Caco-2 (cell line): ENCODE measurements at regions of chr5 and their contacts with region 1.

Region 1: GRCh38 chr5:43396762-43397304 is 15.4 kb downstream of the CCL28 start:
- DNase-seq: peak; percentile 75 to 76
- H3K4me3 ChIP-seq: peak overlapping the region; percentile 71
- H3K4me3 Mint-ChIP-seq: peak overlapping the region; percentile 94
- H3K27ac Mint-ChIP-seq: peak overlapping the region; percentile 96
- H3K4me1 ChIP-seq: no peaks in the 10 kb centered on the region; the same call in 1 of the 2 replicates
- H3K4me1 Mint-ChIP-seq: no peaks in the 10 kb centered on the region
- H3K27me3 ChIP-seq: no peaks in the 10 kb centered on the region
- H3K27me3 Mint-ChIP-seq: no peaks in the 10 kb centered on the region
- CTCF ChIP-seq: no peak

Region 2: GRCh38 chr5:43432473-43433365 is 35.9 kb after region 1 on chr5:
- CTCF ChIA-PET with region 1: no interaction called
- POLR2A ChIA-PET with region 1: no interaction called
- intact Hi-C with region 1: loop called (anchors 5 kb)
- DNase-seq: peak; percentile 52 to 73
- H3K4me3 ChIP-seq: no peak overlapping the region
- H3K4me3 Mint-ChIP-seq: no peak overlapping the region
- H3K27ac Mint-ChIP-seq: no peak overlapping the region
- H3K4me1 ChIP-seq: peaks cover 18% of the 10 kb centered on the region
- H3K4me1 Mint-ChIP-seq: peaks cover 28% of the 10 kb centered on the region
- H3K27me3 ChIP-seq: no peaks in the 10 kb centered on the region
- H3K27me3 Mint-ChIP-seq: no peaks in the 10 kb centered on the region
- CTCF ChIP-seq: no peak